IMR-90 (cell line): ENCODE measurements at regions of chr3 and their contacts with region 1.

Region 1: DNA sequence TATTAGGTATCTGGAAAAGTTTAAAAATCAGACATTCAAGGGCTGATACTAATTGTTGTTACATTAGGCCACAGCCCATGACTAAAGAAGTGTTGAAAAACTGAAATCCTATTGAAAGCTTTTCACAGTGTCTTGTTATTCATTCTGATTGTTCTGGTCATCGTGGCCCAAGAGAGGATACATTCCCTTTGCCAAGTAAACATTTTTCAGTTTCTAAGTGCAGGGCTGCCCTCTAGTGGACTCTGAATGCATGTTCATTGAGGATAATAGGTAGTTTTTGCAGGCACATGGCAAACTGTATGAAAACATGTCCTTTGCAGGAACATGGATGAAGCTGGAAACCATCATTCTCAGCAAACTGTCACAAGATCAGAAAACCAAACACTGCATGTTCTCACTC is 181.1 kb downstream of the MYRIP start:
- DNase-seq: peak; percentile 3
- ATAC-seq: no peak
- H3K4me3 ChIP-seq: no peak overlapping the region
- H3K27ac ChIP-seq: no peak overlapping the region
- H3K4me1 ChIP-seq: no peaks in the 10 kb centered on the region
- H3K27me3 ChIP-seq: no peaks in the 10 kb centered on the region
- CTCF ChIP-seq: 0 out of 2 replicates have a peak, but pooled peaks have one; percentile 24
- POLR2A ChIP-seq: no peak
- RAD21 ChIP-seq: peak; percentile 49

Region 2: GRCh38 chr3:39541917-39542329 is 448.6 kb before region 1 on chr3:
- CTCF ChIA-PET with region 1: no interaction called
- POLR2A ChIA-PET with region 1: no interaction called
- dilution Hi-C with region 1: no loop called
- in situ Hi-C with region 1: no loop called
- intact Hi-C with region 1: loop called (anchors 5 kb)
- DNase-seq: peak; percentile 8
- ATAC-seq: peak; percentile 53; the same call in 1 of the 2 replicates
- H3K4me3 ChIP-seq: no peak overlapping the region
- H3K27ac ChIP-seq: no peak overlapping the region
- H3K4me1 ChIP-seq: no peaks in the 10 kb centered on the region
- H3K27me3 ChIP-seq: no peaks in the 10 kb centered on the region
- CTCF ChIP-seq: peak; percentile 67
- POLR2A ChIP-seq: no peak
- RAD21 ChIP-seq: peak; percentile 60

Region 3: DNA sequence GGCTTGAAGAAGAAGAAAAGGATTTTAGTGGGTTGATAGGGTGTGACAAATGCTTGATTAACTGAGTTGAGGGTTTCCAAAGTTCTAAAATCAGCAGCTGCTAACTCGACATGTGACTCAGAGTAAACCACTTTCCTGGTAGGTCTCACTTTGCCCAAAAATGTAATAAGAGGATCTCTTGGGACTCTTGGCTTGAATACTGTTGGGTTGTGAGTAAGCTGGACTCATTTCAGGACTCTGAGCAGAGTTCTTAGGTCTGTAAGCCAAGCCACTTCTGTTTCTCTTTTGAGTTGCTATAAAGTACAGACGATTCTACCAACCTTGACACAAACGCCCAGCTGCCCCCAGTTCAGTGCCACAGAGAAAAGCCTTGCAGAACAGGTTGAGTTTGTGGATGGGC is 775.4 kb after region 1 on chr3:
- CTCF ChIA-PET with region 1: no interaction called
- POLR2A ChIA-PET with region 1: no interaction called
- dilution Hi-C with region 1: no loop called
- in situ Hi-C with region 1: no loop called
- intact Hi-C with region 1: no loop called
- DNase-seq: no peak
- ATAC-seq: no peak
- H3K4me3 ChIP-seq: no peak overlapping the region
- H3K27ac ChIP-seq: no peak overlapping the region
- H3K4me1 ChIP-seq: no peaks in the 10 kb centered on the region
- H3K27me3 ChIP-seq: no peaks in the 10 kb centered on the region
- CTCF ChIP-seq: no peak
- POLR2A ChIP-seq: no peak
- RAD21 ChIP-seq: no peak